Psoas muscle (tissue), 8 donors: ENCODE measurements at regions of chr12 and their contacts with region 1.

Region 1: DNA sequence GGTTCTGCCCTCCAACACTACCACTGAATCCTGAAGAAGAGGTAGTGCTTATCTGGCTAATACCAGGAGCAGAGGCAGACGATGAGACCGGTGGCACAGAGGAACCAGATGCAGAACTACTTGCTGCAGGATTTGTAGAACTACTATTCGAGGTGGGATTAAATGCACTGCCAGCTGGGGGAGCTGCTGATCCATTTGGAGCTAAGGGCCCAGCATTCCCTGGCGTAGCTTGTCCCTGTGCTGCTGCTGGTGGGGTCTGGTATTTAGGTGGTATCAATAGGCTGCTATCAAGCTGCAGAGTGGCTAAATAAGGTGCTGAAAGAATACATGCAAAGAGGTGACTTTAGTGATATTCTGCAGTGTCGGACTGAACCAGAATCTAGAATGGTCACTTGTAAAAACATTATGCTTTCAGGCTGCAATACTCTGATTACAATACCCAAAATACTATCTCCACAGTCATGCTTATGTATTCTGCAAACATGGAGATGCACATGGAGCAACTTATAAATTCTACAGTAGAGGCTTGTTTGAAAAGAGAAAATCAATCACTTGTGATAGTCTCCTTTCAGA is 294.2 kb downstream of the MED13L start:
- DNase-seq: no peak
- ATAC-seq: peak in 3 of 4 donors; percentile 30 to 57 (median 53)
- H3K4me3 ChIP-seq: no peak overlapping the region
- H3K27ac ChIP-seq: no peak overlapping the region
- H3K4me1 ChIP-seq: peaks cover 11% of the 10 kb centered on the region
- H3K27me3 ChIP-seq: no peaks in the 10 kb centered on the region
- CTCF ChIP-seq: peak; percentile 31

Region 2: GRCh38 chr12:116717466-116718437 is 734.4 kb after region 1 on chr12:
- intact Hi-C with region 1: loop called in 1 of 2 experiments (anchors 10 kb)
- DNase-seq: peak; percentile 84 to 92
- ATAC-seq: peak; percentile 95 to 98 (median 96)
- H3K4me3 ChIP-seq: peak overlapping the region; percentile 57
- H3K27ac ChIP-seq: peak overlapping the region; percentile 82
- H3K4me1 ChIP-seq: peaks cover 37% of the 10 kb centered on the region
- H3K27me3 ChIP-seq: no peaks in the 10 kb centered on the region
- CTCF ChIP-seq: no peak